PC-9 (cell line): ENCODE measurements at regions of chr3 and their contacts with region 1.

Region 1: GRCh38 chr3:188037216-188037718 is 116.7 kb upstream of the LPP start:
- DNase-seq: peak in 1 of 2 experiments; percentile 36
- H3K4me3 ChIP-seq: no peak overlapping the region
- H3K27ac ChIP-seq: peak overlapping the region; percentile 35
- H3K4me1 ChIP-seq: peaks cover 47% of the 10 kb centered on the region
- H3K27me3 ChIP-seq: no peaks in the 10 kb centered on the region
- CTCF ChIP-seq: peak; percentile 64

Region 2: GRCh38 chr3:187946163-187946691 is 91.0 kb before region 1 on chr3:
- CTCF ChIA-PET with region 1: no interaction called
- POLR2A ChIA-PET with region 1: no interaction called
- intact Hi-C with region 1: loop called (anchors 5 kb)
- DNase-seq: peak in 1 of 2 experiments; percentile 57
- H3K4me3 ChIP-seq: peak overlapping the region; percentile 45; the same call in 1 of the 2 replicates
- H3K27ac ChIP-seq: peak overlapping the region; percentile 94
- H3K4me1 ChIP-seq: peaks cover 67% of the 10 kb centered on the region
- H3K27me3 ChIP-seq: no peaks in the 10 kb centered on the region
- CTCF ChIP-seq: no peak

Region 3: GRCh38 chr3:188061133-188061532 is 23.9 kb after region 1 on chr3:
- CTCF ChIA-PET with region 1: no interaction called
- POLR2A ChIA-PET with region 1: no interaction called
- intact Hi-C with region 1: loop called (anchors 1 kb)
- DNase-seq: peak; percentile 92 to 99
- H3K4me3 ChIP-seq: no peak overlapping the region
- H3K27ac ChIP-seq: peak overlapping the region; percentile 46
- H3K4me1 ChIP-seq: peaks cover 36% of the 10 kb centered on the region
- H3K27me3 ChIP-seq: no peaks in the 10 kb centered on the region
- CTCF ChIP-seq: no peak

Region 4: GRCh38 chr3:188362405-188362831 is 325.2 kb after region 1 on chr3:
- CTCF ChIA-PET with region 1: no interaction called
- POLR2A ChIA-PET with region 1: no interaction called
- intact Hi-C with region 1: loop called (anchors 2 kb)
- DNase-seq: peak; percentile 41 to 87
- H3K4me3 ChIP-seq: no peak overlapping the region
- H3K27ac ChIP-seq: peak overlapping the region; percentile 17; the same call in 1 of the 2 replicates
- H3K4me1 ChIP-seq: peaks cover 9% of the 10 kb centered on the region
- H3K27me3 ChIP-seq: no peaks in the 10 kb centered on the region
- CTCF ChIP-seq: 0 out of 2 replicates have a peak, but pooled peaks have one; percentile 38